ENCODE measurements at regions of chr1 and their contacts with region 1.

Region 1: DNA sequence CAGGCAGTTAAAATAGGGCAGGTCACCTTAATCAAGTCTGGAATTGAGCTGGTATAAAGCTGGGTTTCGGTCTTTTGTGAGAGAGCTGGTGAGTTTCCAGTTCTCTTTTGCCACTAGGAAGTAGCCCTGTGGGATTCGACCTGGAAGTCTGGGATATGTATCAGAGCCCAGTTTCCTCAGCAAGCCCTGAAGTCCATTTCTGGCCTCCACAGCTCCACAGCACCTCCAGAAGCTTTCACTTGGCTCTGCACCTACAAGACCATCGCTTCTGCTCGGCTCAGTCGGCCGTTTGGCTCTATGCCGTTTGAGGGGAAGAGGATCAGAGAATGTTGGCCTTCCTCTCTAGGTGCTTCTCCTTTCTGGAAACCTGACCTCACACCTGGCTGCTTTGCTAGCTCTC is 148.0 kb downstream of the GALNT2 start:
- DNase-seq: peak in 1 of 2 donors; percentile 90
- H3K4me3 ChIP-seq: peak overlapping the region in 1 of 2 donors; percentile 24
- H3K27ac ChIP-seq: peak overlapping the region; percentile 93 to 95
- H3K4me1 ChIP-seq: peaks cover 12 to 68% of the 10 kb centered on the region in 2 donors
- H3K27me3 ChIP-seq: no peaks in the 10 kb centered on the region
- CTCF ChIP-seq: peak; percentile 68 to 87 (median 82)

Region 2: GRCh38 chr1:229661022-229661877 is 553.8 kb before region 1 on chr1:
- intact Hi-C with region 1: loop called (anchors 1 kb)
- DNase-seq: peak in 1 of 2 donors; percentile 89
- H3K4me3 ChIP-seq: no peak overlapping the region
- H3K27ac ChIP-seq: peak overlapping the region in 1 of 2 donors; percentile 10
- H3K4me1 ChIP-seq: no peaks in the 10 kb centered on the region
- H3K27me3 ChIP-seq: no peaks in the 10 kb centered on the region
- CTCF ChIP-seq: peak; percentile 84 to 91 (median 85)

Region 3: GRCh38 chr1:229828461-229828860 is 386.6 kb before region 1 on chr1:
- intact Hi-C with region 1: loop called (anchors 5 kb)
- DNase-seq: no peak
- H3K4me3 ChIP-seq: peak overlapping the region in 1 of 2 donors; percentile 11
- H3K27ac ChIP-seq: peak overlapping the region; percentile 71 to 73
- H3K4me1 ChIP-seq: peaks cover 0 to 23% of the 10 kb centered on the region in 2 donors
- H3K27me3 ChIP-seq: no peaks in the 10 kb centered on the region
- CTCF ChIP-seq: no peak

Region 4: GRCh38 chr1:229920683-229921082 is 294.3 kb before region 1 on chr1:
- intact Hi-C with region 1: no loop called
- DNase-seq: no peak
- H3K4me3 ChIP-seq: no peak overlapping the region
- H3K27ac ChIP-seq: no peak overlapping the region
- H3K4me1 ChIP-seq: no peaks in the 10 kb centered on the region
- H3K27me3 ChIP-seq: no peaks in the 10 kb centered on the region
- CTCF ChIP-seq: no peak

Region 5: DNA sequence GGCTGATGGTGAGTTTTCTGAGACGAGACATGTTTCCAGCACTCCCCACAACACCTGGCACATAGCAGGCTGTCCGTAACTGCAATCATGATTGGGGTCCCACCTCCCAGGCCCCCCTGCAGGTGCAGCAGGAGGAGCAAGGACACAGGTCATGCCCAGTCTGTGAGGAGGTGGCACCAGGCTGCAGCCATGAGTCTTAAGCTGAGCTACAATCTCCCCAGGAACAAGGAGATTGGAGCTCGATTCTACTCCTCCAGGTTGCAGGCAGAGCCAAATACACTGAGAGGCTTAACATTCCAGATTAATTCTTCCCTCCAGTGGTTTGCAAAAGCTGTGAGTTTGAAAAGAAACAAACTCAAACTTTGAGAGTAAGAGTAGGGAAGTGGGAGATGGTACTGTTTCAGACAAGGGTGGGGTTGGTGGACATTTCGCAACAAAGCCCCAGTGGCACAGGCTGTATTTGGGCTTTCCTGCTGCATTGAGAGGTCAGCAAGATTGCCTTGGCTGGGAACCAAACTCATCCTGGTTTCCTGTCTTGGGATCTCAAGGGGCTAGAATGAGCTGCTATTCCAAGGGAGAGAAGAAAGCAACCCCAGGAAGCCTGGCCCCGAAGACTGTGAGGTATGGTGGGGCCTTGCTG is 212.7 kb before region 1 on chr1:
- intact Hi-C with region 1: loop called (anchors 5 kb)
- DNase-seq: no peak
- H3K4me3 ChIP-seq: no peak overlapping the region
- H3K27ac ChIP-seq: no peak overlapping the region
- H3K4me1 ChIP-seq: peaks cover 6 to 30% of the 10 kb centered on the region in 2 donors
- H3K27me3 ChIP-seq: no peaks in the 10 kb centered on the region
- CTCF ChIP-seq: no peak

Region 6: DNA sequence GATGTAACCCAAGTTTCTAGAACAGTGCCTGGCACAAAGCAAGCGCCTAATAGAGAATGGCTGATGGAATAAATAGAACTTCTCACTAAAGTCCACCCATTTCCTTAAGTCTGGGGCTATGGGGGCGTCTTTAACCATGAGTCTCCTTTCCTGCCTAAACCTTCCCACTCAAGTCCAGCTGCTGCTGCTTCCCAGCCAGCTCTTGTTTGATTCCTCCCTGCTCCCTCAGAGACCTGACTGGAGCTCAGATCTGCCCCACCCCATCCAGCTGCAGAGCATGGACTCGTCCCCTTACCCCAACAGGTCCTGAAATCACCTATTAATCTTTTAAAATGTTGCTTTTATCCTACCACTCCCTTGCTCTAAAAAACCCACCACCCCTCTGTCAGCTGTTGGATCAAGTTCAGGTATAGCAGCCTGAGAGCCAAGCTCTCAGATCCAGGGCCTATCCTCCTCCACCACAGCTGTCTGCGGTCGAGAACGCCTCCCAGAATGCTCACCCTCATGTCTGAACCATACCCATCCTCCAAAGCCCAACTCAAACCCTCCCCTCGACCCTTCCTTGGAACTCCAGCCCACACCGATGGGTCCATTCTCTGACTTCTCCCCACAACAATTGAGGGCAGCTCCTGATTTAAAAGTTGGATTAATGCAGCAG is 160.8 kb before region 1 on chr1:
- intact Hi-C with region 1: no loop called
- DNase-seq: no peak
- H3K4me3 ChIP-seq: no peak overlapping the region
- H3K27ac ChIP-seq: no peak overlapping the region
- H3K4me1 ChIP-seq: no peaks in the 10 kb centered on the region
- H3K27me3 ChIP-seq: no peaks in the 10 kb centered on the region
- CTCF ChIP-seq: no peak

Region 7: GRCh38 chr1:230084138-230084880 is 130.7 kb before region 1 on chr1:
- intact Hi-C with region 1: loop called (anchors 2 kb)
- DNase-seq: peak; percentile 75 to 95
- H3K4me3 ChIP-seq: peak overlapping the region in 1 of 2 donors; percentile 12
- H3K27ac ChIP-seq: peak overlapping the region; percentile 92 to 95
- H3K4me1 ChIP-seq: peaks cover 30 to 66% of the 10 kb centered on the region in 2 donors
- H3K27me3 ChIP-seq: no peaks in the 10 kb centered on the region
- CTCF ChIP-seq: no peak

Region 8: GRCh38 chr1:230104395-230105244 is 110.4 kb before region 1 on chr1:
- intact Hi-C with region 1: loop called (anchors 2 kb)
- DNase-seq: peak; percentile 97 to 100
- H3K4me3 ChIP-seq: peak overlapping the region; percentile 2 to 43
- H3K27ac ChIP-seq: peak overlapping the region; percentile 87 to 90
- H3K4me1 ChIP-seq: peaks cover 14 to 65% of the 10 kb centered on the region in 2 donors
- H3K27me3 ChIP-seq: no peaks in the 10 kb centered on the region
- CTCF ChIP-seq: peak in 2 of 3 experiments; percentile 11 to 21

Region 9: DNA sequence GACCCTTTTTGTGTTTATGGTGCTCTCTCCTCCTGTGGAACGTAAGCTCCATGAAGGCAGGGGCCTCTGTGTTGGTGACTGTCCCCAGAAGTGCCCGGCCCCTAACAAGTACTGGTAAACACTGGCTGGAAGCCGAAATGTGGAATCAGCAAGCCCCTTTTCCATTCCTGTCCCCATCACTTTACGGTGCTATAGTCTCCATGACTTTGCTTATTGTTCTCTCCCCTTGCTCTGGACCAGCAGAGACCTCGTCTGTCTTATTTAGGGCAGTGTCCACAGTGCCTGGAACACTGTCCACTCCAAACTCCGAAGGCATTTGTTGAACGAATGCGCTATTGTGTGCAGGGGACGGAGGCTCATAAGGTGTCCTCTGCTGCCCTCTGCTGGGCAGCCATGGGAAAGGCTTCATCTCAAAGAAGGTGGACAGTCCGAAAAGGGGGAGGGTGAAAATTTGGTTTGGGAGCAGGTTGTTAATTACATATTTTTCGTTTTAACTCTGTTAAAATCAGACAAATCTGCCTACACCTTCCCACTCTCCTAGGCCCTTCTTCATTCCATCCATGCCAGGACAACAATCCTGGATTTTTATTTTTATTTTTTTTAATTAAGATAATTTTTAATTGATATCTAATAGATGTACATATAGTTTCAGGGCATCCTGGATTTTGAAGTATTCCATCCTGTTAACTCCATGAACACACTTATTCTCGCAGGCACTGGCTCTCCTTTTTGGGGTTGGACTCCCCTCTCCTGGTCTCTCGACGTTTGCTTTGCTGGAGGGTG is 95.5 kb after region 1 on chr1:
- intact Hi-C with region 1: loop called (anchors 5 kb)
- DNase-seq: peak in 1 of 2 donors; percentile 89
- H3K4me3 ChIP-seq: no peak overlapping the region
- H3K27ac ChIP-seq: no peak overlapping the region
- H3K4me1 ChIP-seq: peaks cover 0 to 2% of the 10 kb centered on the region in 2 donors
- H3K27me3 ChIP-seq: no peaks in the 10 kb centered on the region
- CTCF ChIP-seq: peak; percentile 86 to 93 (median 90)